ENCODE measurements at regions of chr19 and their contacts with region 1.

Region 1: GRCh38 chr19:17511724-17512573 is 500 bp downstream of the PGLS start:
- DNase-seq: peak; percentile 78 to 91 (median 84)
- H3K4me3 ChIP-seq: peak overlapping the region; percentile 65 to 100 (median 94)
- H3K27ac ChIP-seq: peak overlapping the region; percentile 96 to 100 (median 99)
- H3K27me3 ChIP-seq: no peaks in the 10 kb centered on the region
- CTCF ChIP-seq: peak in 55 of 56 donors; percentile 32 to 71 (median 58)

Region 2: DNA sequence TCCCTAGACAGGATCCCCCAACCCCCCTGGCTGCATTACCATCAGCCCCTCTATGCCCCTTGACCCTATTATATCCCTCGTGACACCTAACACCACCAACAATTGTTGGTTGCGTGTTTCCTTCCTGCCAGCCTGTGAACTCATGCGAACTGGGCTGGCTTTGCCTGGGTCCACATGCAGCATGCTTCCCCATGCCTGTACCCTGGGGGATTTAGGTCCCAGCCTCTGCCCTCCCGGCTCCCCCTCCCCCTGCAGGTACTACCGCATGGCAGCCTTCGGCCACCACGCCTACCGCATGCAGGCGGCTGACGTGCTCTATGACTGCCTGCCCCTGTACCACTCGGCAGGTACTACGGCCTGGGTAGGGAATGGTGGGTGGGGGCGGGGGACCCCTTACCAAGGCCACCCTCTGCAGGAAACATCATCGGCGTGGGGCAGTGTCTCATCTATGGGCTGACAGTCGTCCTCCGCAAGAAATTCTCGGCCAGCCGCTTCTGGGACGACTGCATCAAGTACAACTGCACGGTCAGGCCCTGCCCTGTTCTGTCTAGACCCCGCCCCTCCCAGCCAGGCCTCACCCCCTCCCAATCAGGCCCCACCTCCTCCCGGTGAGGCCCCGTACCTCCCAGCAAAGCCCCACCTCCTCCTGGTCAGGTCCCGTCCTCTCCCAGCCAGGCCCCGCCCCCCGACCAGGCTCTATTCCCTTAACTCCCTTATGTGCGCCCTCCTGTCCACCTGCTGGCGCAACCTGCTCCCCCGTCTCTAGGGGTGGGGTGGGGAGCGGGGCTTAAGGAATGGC is 23.2 kb before region 1 on chr19:
- intact Hi-C with region 1: no loop called
- DNase-seq: no peak
- H3K4me3 ChIP-seq: peak overlapping the region in 3 of 59 donors; percentile 3 to 24 (median 16)
- H3K27ac ChIP-seq: peak overlapping the region in 44 of 59 donors; percentile 4 to 90 (median 56)
- H3K27me3 ChIP-seq: no peaks in the 10 kb centered on the region
- CTCF ChIP-seq: no peak

Region 3: GRCh38 chr19:17555480-17555928 is 43.6 kb after region 1 on chr19 and contains the start of gene COLGALT1:
- intact Hi-C with region 1: loop called (anchors 1 to 5 kb)
- DNase-seq: peak; percentile 98 to 100 (median 99)
- H3K4me3 ChIP-seq: peak within 1 kb of the TSS; percentile 72 to 98 (median 92)
- H3K27ac ChIP-seq: peak within 1 kb of the TSS in 58 of 59 donors; percentile 4 to 91 (median 76)
- H3K27me3 ChIP-seq: no peaks in the 10 kb centered on the region
- CTCF ChIP-seq: peak in 8 of 56 donors; percentile 3 to 28 (median 16)
- total RNA-seq, gene COLGALT1: 20.9 to 73.4 (median 38.7) TPM

Region 4: GRCh38 chr19:17570791-17571190 is 58.8 kb after region 1 on chr19:
- intact Hi-C with region 1: loop called in 1 of 2 experiments (anchors 5 kb)
- DNase-seq: no peak
- H3K4me3 ChIP-seq: no peak overlapping the region
- H3K27ac ChIP-seq: no peak overlapping the region
- H3K27me3 ChIP-seq: no peaks in the 10 kb centered on the region
- CTCF ChIP-seq: no peak

Measured in dorsolateral prefrontal cortex (tissue), 120 donors.